Colonic mucosa (tissue), 4 donors: ENCODE measurements at regions of chrX and their contacts with region 1.

Region 1: GRCh38 chrX:105189093-105189492 is 31.4 kb downstream of the TEX13A start:
- DNase-seq: no peak
- H3K4me3 ChIP-seq: no peak overlapping the region
- H3K27ac ChIP-seq: no peak overlapping the region
- H3K4me1 ChIP-seq: no peaks in the 10 kb centered on the region
- H3K27me3 ChIP-seq: no peaks in the 10 kb centered on the region
- CTCF ChIP-seq: no peak

Region 2: DNA sequence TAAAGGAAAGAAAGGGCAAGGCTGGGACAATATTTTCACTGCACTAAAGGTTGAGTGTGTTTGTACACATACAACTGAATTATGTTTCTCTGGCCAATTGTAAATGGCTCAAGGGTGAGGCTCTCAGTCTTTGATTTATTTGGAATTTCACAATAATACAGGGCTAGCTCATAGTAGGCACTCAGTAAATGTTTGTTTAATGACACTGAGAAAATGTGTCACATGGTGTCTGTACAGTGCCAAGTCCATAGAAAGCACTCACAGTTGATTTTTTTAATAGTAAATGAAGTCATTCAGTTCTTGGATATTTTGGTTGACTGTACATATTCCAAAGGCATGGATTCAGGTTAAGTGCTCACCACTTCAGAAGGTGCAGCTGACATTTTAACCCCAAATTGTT is 446.7 kb before region 1 on chrX:
- intact Hi-C with region 1: no loop called
- DNase-seq: no peak
- H3K4me3 ChIP-seq: no peak overlapping the region
- H3K27ac ChIP-seq: no peak overlapping the region
- H3K4me1 ChIP-seq: no peaks in the 10 kb centered on the region
- H3K27me3 ChIP-seq: no peaks in the 10 kb centered on the region
- CTCF ChIP-seq: no peak

Region 3: GRCh38 chrX:104922206-104922621 is 266.9 kb before region 1 on chrX:
- intact Hi-C with region 1: loop called (anchors 5 kb)
- DNase-seq: peak; percentile 77
- H3K4me3 ChIP-seq: no peak overlapping the region
- H3K27ac ChIP-seq: no peak overlapping the region
- H3K4me1 ChIP-seq: no peaks in the 10 kb centered on the region
- H3K27me3 ChIP-seq: no peaks in the 10 kb centered on the region
- CTCF ChIP-seq: peak; percentile 98

Region 4: GRCh38 chrX:104953251-104953650 is 235.8 kb before region 1 on chrX:
- intact Hi-C with region 1: no loop called
- DNase-seq: no peak
- H3K4me3 ChIP-seq: no peak overlapping the region
- H3K27ac ChIP-seq: no peak overlapping the region
- H3K4me1 ChIP-seq: no peaks in the 10 kb centered on the region
- H3K27me3 ChIP-seq: no peaks in the 10 kb centered on the region
- CTCF ChIP-seq: no peak